ENCODE measurements at regions of chr13 and their contacts with region 1.

Region 1: GRCh38 chr13:20773194-20774080 is at the start of gene EEF1AKMT1:
- DNase-seq: peak; percentile 90 to 92 (median 91)
- H3K4me3 ChIP-seq: peak within 1 kb of the TSS; percentile 78 to 85 (median 84)
- H3K4me3 Mint-ChIP-seq: peak within 1 kb of the TSS; percentile 97
- H3K27ac ChIP-seq: peak within 1 kb of the TSS; percentile 74 to 81
- H3K27ac Mint-ChIP-seq: peak within 1 kb of the TSS; percentile 87 to 98 (median 95)
- H3K4me1 ChIP-seq: peaks cover 15 to 17% of the 10 kb centered on the region in 2 donors
- H3K4me1 Mint-ChIP-seq: peaks cover 11% of the 10 kb centered on the region
- H3K27me3 ChIP-seq: no peaks in the 10 kb centered on the region
- H3K27me3 Mint-ChIP-seq: peaks cover 0 to 5% (median 0%) of the 10 kb centered on the region in 3 donors
- CTCF ChIP-seq: no peak
- polyA plus RNA-seq, gene EEF1AKMT1: 1.7 to 4.2 (median 4.2) TPM

Region 2: DNA sequence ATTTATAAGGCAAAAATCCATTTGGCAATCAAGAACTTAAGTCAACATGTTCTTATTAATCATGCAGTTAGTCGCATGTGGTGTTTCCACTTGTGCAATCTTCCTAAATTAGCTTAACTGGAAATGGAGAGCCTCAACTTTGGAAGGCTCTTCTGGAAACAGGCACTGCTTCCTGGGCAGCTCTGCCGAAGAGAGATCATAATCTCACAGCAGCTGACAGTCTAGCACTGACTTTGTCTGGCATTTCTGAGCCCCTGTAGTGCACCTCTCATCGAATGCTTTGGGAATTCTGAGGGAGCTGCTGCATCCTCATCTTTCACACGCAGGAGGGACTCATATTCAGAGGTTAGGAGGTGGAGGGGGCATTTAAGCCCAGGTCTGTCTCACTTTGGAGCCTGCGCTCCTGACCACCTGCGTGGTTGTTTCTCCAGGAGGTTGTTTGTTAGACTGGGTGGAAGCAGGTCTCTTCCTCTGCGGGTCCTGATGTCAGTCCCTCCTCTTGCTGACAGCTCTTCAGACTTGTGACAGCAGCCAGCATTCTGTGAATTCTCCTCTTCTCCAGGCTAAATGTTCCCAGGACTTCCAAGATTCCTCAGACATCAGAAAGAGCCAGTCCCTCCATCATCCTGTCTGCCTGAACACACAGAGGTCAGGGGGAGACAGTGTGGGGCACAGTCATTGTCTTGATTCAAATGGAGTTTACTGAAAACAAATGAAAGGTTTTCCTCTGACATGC is 440.9 kb before region 1 on chr13:
- intact Hi-C with region 1: no loop called
- DNase-seq: no peak
- H3K4me3 ChIP-seq: no peak overlapping the region
- H3K4me3 Mint-ChIP-seq: no peak overlapping the region
- H3K27ac ChIP-seq: no peak overlapping the region
- H3K27ac Mint-ChIP-seq: no peak overlapping the region
- H3K4me1 ChIP-seq: peaks cover 13 to 21% of the 10 kb centered on the region in 2 donors
- H3K4me1 Mint-ChIP-seq: peaks cover 30% of the 10 kb centered on the region
- H3K27me3 ChIP-seq: no peaks in the 10 kb centered on the region
- H3K27me3 Mint-ChIP-seq: peaks cover 0 to 5% (median 0%) of the 10 kb centered on the region in 3 donors
- CTCF ChIP-seq: no peak

Region 3: DNA sequence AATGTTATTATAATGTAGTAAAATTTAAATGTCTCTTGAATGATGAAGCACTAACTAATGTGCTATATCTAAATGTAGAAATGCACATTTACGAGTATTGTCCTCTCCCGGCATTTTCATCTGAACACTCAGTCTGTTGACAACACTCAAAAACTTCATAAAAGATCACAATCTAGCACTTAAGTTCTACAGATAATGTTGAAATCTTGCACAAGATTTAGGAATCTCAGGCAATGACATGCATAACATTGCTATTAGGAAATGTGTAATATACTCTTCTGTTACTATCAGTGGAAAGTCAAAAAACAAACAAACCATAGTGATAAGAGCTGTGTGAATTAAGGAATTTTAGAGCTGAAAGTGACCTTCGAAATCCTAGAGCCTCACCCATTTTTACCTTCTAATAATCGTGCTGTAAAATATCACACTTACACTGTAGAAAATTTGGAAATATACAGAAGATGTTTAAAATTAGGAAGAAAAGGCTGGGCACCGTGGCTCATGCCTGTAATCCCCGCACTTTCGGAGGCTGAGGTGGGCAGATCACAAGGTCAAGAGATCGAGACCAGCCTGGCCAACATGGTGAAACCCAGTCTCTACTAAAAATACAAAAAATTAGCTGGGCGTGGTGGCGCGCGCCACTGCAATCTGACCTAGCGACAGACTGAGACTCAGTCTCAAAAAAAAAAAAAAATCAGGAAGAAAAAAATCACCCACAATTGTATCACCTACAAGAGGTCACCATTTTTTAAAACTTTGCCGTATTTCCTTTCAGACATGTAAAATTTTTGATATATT is 166.8 kb after region 1 on chr13:
- intact Hi-C with region 1: no loop called
- DNase-seq: no peak
- H3K4me3 ChIP-seq: no peak overlapping the region
- H3K4me3 Mint-ChIP-seq: no peak overlapping the region
- H3K27ac ChIP-seq: no peak overlapping the region
- H3K27ac Mint-ChIP-seq: no peak overlapping the region
- H3K4me1 ChIP-seq: peaks cover 12 to 13% of the 10 kb centered on the region in 2 donors
- H3K4me1 Mint-ChIP-seq: peaks cover 13% of the 10 kb centered on the region
- H3K27me3 ChIP-seq: no peaks in the 10 kb centered on the region
- H3K27me3 Mint-ChIP-seq: peaks cover 0 to 7% (median 5%) of the 10 kb centered on the region in 3 donors
- CTCF ChIP-seq: no peak

Region 4: GRCh38 chr13:21603531-21604448 is 830.4 kb after region 1 on chr13 and contains the start of gene MICU2:
- intact Hi-C with region 1: loop called in 1 of 2 experiments (anchors 5 kb)
- DNase-seq: peak; percentile 91 to 93 (median 92)
- H3K4me3 ChIP-seq: peak within 1 kb of the TSS; percentile 60 to 84 (median 83)
- H3K4me3 Mint-ChIP-seq: peak within 1 kb of the TSS; percentile 84 to 89
- H3K27ac ChIP-seq: peak within 1 kb of the TSS; percentile 90 to 91
- H3K27ac Mint-ChIP-seq: peak within 1 kb of the TSS; percentile 87 to 98 (median 95)
- H3K4me1 ChIP-seq: peaks cover 12 to 16% of the 10 kb centered on the region in 2 donors
- H3K4me1 Mint-ChIP-seq: peaks cover 21% of the 10 kb centered on the region
- H3K27me3 ChIP-seq: peaks cover 0 to 4% of the 10 kb centered on the region in 2 donors
- H3K27me3 Mint-ChIP-seq: peaks cover 8 to 18% (median 11%) of the 10 kb centered on the region in 3 donors
- CTCF ChIP-seq: no peak
- polyA plus RNA-seq, gene MICU2: 21.5 to 32.1 (median 26.8) TPM

Measured in CD14-positive monocyte (primary cell).